ENCODE measurements at regions of chr2 and their contacts with region 1.

Region 1: GRCh38 chr2:68423966-68424650 is 43.0 kb downstream of the FBXO48 start:
- DNase-seq: peak in 1 of 2 donors; percentile 50
- ATAC-seq: peak; percentile 76 to 84 (median 82)
- H3K4me3 ChIP-seq: no peak overlapping the region
- H3K4me3 Mint-ChIP-seq: no peak overlapping the region
- H3K27ac ChIP-seq: peak overlapping the region; percentile 67
- H3K27ac Mint-ChIP-seq: no peak overlapping the region
- H3K4me1 ChIP-seq: peaks cover 43% of the 10 kb centered on the region
- H3K4me1 Mint-ChIP-seq: peaks cover 41 to 49% of the 10 kb centered on the region in 2 donors
- H3K27me3 ChIP-seq: no peaks in the 10 kb centered on the region
- H3K27me3 Mint-ChIP-seq: no peaks in the 10 kb centered on the region
- CTCF ChIP-seq: no peak

Region 2: DNA sequence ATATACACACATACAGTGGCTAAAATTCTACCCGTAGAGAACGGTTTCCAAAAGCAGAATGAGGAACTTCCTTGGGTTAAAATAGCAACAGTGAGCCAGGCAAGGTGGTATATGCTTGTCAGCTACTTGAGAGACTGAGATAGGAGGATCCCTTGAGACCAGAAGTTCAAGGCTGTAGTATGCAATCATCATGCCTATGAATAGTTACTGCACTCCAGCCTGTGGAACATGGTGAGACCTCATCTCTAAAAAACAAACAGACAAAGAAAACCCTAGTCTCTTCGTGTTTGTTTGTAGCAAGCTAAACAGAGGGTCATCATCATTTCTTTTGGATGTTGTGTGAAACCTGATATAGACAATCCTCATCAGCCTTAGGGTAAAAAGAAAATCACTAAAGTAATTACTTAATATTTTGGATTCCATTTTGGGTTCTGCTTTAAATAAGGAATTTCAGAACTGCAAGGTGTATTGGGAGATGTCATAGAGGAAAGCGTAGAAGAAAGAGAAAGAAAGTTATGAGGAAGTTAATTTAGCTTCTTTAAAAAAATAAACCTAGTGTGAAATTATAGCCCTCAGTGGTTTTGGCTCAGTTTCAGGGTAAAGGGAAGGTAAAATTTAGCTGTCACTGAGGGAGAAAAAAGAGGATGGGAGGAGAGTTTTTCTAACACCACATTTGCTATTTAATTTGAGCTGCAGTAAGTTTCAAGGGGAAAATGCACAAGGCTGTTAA is 12.5 kb before region 1 on chr2:
- intact Hi-C with region 1: loop called (anchors 2 kb)
- DNase-seq: peak in 1 of 2 donors; percentile 26
- ATAC-seq: peak; percentile 52 to 64 (median 62)
- H3K4me3 ChIP-seq: no peak overlapping the region
- H3K4me3 Mint-ChIP-seq: peak overlapping the region; percentile 85
- H3K27ac ChIP-seq: peak overlapping the region; percentile 58
- H3K27ac Mint-ChIP-seq: peak overlapping the region; percentile 77 to 88
- H3K4me1 ChIP-seq: peaks cover 24% of the 10 kb centered on the region
- H3K4me1 Mint-ChIP-seq: peaks cover 67 to 70% of the 10 kb centered on the region in 2 donors
- H3K27me3 ChIP-seq: no peaks in the 10 kb centered on the region
- H3K27me3 Mint-ChIP-seq: no peaks in the 10 kb centered on the region
- CTCF ChIP-seq: no peak

Region 3: DNA sequence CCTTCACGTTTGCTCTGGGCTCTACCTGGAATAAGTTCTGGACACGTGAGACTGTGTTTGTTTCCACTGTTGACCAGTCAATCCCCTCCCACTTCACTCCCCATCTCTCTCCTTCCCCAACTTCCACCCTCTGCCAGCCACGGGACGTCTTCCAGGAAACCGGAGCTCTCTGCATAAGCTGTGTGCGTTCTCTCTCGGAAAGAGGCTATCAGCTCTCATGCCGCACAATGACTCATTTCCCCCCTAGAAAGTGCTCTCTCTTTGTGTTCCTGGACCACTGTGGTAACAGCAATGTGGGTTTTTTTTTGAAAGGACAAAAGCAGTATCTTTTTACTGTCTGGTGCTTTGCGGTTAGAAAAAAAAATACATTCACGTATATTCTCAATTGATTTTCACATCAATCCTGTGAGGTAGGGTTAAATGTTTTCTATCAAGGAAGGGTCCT is 229.5 kb after region 1 on chr2:
- intact Hi-C with region 1: no loop called
- DNase-seq: peak in 1 of 2 donors; percentile 49
- ATAC-seq: peak; percentile 72 to 93 (median 92)
- H3K4me3 ChIP-seq: no peak overlapping the region
- H3K4me3 Mint-ChIP-seq: peak overlapping the region; percentile 75
- H3K27ac ChIP-seq: no peak overlapping the region
- H3K27ac Mint-ChIP-seq: peak overlapping the region; percentile 16 to 73
- H3K4me1 ChIP-seq: peaks cover 21% of the 10 kb centered on the region
- H3K4me1 Mint-ChIP-seq: peaks cover 16 to 39% of the 10 kb centered on the region in 2 donors
- H3K27me3 ChIP-seq: no peaks in the 10 kb centered on the region
- H3K27me3 Mint-ChIP-seq: peaks cover 27 to 40% of the 10 kb centered on the region in 2 donors
- CTCF ChIP-seq: no peak

Measured in natural killer cell (primary cell).